Naive thymus-derived CD4-positive, alpha-beta T cell (primary cell): ENCODE measurements at regions of chr6 and their contacts with region 1.

Region 1: DNA sequence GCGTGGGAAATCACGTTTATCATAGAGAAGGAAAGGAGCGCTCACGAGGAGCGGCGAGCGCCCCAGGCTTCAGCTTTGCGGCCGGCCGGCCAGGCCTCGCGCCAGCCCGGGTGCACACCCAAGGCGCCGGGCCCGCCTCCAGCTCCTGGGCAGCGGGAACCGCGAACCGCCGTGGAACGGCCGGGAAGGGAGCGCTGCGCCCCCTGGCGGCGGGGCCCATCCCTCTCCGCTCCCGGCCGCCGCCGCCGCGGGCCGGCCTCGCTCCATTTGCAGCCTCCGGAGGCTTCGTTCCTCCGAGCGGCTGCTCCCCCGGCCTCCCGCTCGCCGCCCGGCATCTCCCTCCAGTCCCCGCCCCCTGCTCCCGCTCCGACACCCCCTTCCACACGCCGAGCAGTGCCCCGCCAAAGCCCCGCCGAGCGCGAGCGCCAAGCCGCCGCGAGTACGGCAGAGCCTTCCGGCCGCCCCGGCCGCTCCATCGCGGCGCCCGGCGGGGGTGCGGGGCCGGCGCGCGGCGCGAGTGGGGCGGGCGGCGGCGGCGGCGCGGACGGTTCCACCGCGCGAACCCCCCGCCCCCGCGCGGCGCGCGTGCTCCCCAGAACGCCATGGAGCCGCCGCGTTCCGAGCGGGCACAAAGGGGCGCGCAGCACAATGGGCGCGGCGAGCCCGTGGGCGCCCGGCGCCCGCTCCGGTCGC is 956 bp downstream of the BEND3 start:
- DNase-seq: peak; percentile 39 to 85 (median 67)
- ATAC-seq: peak; percentile 88
- H3K4me3 ChIP-seq: peak overlapping the region; percentile 32
- H3K4me3 Mint-ChIP-seq: peak overlapping the region; percentile 71 to 88 (median 85)
- H3K27ac ChIP-seq: no peak overlapping the region
- H3K27ac Mint-ChIP-seq: peak overlapping the region in 5 of 9 donors; percentile 49 to 77 (median 63)
- H3K4me1 ChIP-seq: peaks cover 14% of the 10 kb centered on the region in 2 donors
- H3K4me1 Mint-ChIP-seq: peaks cover 8 to 21% (median 18%) of the 10 kb centered on the region in 7 donors
- H3K27me3 ChIP-seq: no peaks in the 10 kb centered on the region
- H3K27me3 Mint-ChIP-seq: peaks cover 0 to 22% (median 7%) of the 10 kb centered on the region in 5 donors

Region 2: GRCh38 chr6:106444777-106445507 is 669.4 kb before region 1 on chr6:
- CTCF ChIA-PET with region 1: no interaction called
- POLR2A ChIA-PET with region 1: no interaction called
- intact Hi-C with region 1: loop called (anchors 1 to 10 kb)
- DNase-seq: peak in 7 of 9 donors; percentile 55 to 81 (median 70)
- ATAC-seq: peak; percentile 81
- H3K4me3 ChIP-seq: no peak overlapping the region
- H3K4me3 Mint-ChIP-seq: no peak overlapping the region
- H3K27ac ChIP-seq: no peak overlapping the region
- H3K27ac Mint-ChIP-seq: peak overlapping the region in 1 of 9 donors; percentile 43
- H3K4me1 ChIP-seq: peaks cover 0 to 5% of the 10 kb centered on the region in 2 donors
- H3K4me1 Mint-ChIP-seq: peaks cover 5 to 16% (median 14%) of the 10 kb centered on the region in 7 donors
- H3K27me3 ChIP-seq: peaks cover 0 to 4% of the 10 kb centered on the region in 2 donors
- H3K27me3 Mint-ChIP-seq: peaks cover 19 to 36% (median 27%) of the 10 kb centered on the region in 5 donors

Region 3: GRCh38 chr6:106629103-106629858 is 485.1 kb before region 1 on chr6 and contains the starts of genes QRSL1 and RTN4IP1:
- CTCF ChIA-PET with region 1: no interaction called
- POLR2A ChIA-PET with region 1: no interaction called
- intact Hi-C with region 1: loop called in 1 of 2 experiments (anchors 2 kb)
- DNase-seq: peak; percentile 67 to 94 (median 90)
- ATAC-seq: peak; percentile 98
- H3K4me3 ChIP-seq: peak within 1 kb of the TSS; percentile 87
- H3K4me3 Mint-ChIP-seq: peak within 1 kb of the TSS; percentile 93 to 100 (median 98)
- H3K27ac ChIP-seq: peak within 1 kb of the TSS; percentile 94
- H3K27ac Mint-ChIP-seq: peak within 1 kb of the TSS; percentile 96 to 99 (median 98)
- H3K4me1 ChIP-seq: peaks cover 7 to 13% of the 10 kb centered on the region in 2 donors
- H3K4me1 Mint-ChIP-seq: peaks cover 13 to 67% (median 38%) of the 10 kb centered on the region in 7 donors
- H3K27me3 ChIP-seq: no peaks in the 10 kb centered on the region
- H3K27me3 Mint-ChIP-seq: no peaks in the 10 kb centered on the region
- total RNA-seq, gene QRSL1: 8.0 to 14.8 (median 13.6) TPM
- total RNA-seq, gene RTN4IP1: 5.1 to 6.4 (median 5.6) TPM

Region 4: DNA sequence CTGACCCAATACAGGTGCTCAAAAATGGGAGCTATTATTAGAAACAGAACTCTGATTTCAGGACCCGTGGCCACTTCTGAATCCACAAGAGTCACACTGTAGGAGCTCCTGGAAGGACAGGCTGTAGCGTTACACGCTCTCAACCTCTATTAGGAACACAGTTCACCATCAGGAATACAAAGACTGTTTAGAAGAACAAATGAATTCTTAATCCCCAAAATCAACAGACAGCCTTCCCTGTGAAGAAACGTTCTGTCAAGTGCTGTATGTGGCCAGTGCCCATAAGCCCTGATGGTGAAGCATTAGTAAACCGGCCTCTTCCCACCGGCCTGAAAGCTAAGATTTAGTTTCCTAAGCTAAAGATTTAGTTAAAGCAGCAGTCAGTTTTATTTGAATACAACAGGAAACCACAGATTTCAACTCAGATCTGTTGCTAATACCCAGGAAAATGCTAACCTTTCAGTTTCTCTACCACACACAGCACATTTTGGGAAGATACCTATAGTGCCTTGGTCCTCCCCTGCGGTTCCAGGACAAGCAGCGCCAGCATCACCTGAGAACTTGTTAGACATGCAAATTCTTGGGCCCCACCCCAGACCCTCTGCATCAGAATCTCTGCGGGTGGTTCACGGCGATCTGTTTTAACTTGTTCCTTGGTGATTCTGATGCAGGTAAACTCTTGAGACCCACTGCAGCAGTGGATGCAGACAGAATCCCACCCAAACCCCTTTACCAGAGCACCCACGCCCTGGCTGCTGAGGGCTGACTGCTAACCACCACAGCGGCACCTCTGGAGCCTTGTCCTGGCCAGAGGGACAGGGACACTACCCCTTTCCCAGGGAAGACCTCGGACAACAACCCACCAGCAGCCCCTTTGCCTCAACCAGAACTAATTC is 53.0 kb before region 1 on chr6:
- CTCF ChIA-PET with region 1: no interaction called
- POLR2A ChIA-PET with region 1: no interaction called
- intact Hi-C with region 1: loop called in 1 of 2 experiments (anchors 2 kb)
- DNase-seq: peak in 3 of 9 donors; percentile 3 to 18 (median 5)
- ATAC-seq: peak; percentile 59
- H3K4me3 ChIP-seq: peak overlapping the region; percentile 14
- H3K4me3 Mint-ChIP-seq: peak overlapping the region; percentile 59 to 81 (median 78)
- H3K27ac ChIP-seq: no peak overlapping the region
- H3K27ac Mint-ChIP-seq: peak overlapping the region in 8 of 9 donors; percentile 32 to 82 (median 54)
- H3K4me1 ChIP-seq: peaks cover 4 to 11% of the 10 kb centered on the region in 2 donors
- H3K4me1 Mint-ChIP-seq: peaks cover 10 to 50% (median 31%) of the 10 kb centered on the region in 7 donors
- H3K27me3 ChIP-seq: no peaks in the 10 kb centered on the region
- H3K27me3 Mint-ChIP-seq: no peaks in the 10 kb centered on the region

Region 5: DNA sequence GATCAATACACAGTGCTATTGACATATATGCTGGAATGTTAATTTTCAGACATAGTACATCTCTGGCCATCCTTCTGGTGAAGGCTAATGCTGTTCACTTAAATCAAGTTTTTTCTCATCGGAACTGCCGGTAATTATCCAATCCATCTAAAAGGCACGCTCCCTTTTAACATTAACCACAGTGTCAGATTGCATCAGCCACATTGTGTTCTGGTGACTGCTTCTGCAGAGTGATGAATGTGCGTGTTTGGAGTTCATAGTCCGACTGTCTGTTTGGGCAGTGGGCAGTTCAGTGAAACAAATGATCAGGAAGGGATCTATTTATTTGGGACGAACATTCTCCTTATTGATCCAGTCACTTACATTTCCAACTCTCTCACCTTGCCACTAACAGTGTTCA is 425.1 kb after region 1 on chr6:
- CTCF ChIA-PET with region 1: no interaction called
- POLR2A ChIA-PET with region 1: no interaction called
- intact Hi-C with region 1: no loop called
- DNase-seq: no peak
- ATAC-seq: no peak
- H3K4me3 ChIP-seq: no peak overlapping the region
- H3K4me3 Mint-ChIP-seq: no peak overlapping the region
- H3K27ac ChIP-seq: no peak overlapping the region
- H3K27ac Mint-ChIP-seq: no peak overlapping the region
- H3K4me1 ChIP-seq: no peaks in the 10 kb centered on the region
- H3K4me1 Mint-ChIP-seq: no peaks in the 10 kb centered on the region
- H3K27me3 ChIP-seq: no peaks in the 10 kb centered on the region
- H3K27me3 Mint-ChIP-seq: peaks cover 23 to 46% (median 30%) of the 10 kb centered on the region in 5 donors

Region 6: DNA sequence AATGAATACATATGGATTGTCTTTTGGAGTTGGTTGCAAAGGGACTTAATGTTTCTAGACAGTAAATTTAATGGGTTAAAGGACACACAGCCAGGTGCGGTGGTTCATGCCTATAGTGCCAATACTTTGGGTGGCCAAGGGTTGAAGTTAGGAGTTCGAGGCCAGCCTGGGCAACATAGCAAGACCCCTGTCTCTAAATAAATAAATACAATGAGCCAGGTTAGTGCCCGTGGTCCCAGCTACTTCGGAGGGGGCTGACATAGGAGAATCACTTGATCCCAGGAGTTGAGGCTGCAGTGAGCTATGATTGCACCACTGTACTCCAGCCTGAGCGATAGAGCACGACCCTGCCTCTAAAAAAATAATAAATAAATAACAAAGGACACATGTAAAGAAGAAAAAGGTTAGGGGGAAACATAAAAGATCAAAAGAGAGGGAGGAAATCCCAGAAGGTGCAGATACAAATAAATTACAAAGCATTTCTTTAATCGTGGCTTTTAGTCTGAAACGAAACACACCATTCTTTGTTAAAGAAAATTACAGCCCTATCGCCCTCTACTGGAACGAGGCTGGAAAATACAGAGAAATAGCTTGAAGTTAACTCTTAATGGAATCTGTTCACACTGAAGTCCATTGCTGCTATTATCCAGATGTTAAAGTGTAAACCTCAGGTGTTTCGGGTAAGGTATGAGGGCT is 752.4 kb after region 1 on chr6:
- CTCF ChIA-PET with region 1: no interaction called
- POLR2A ChIA-PET with region 1: no interaction called
- intact Hi-C with region 1: loop called in 1 of 2 experiments (anchors 10 kb)
- DNase-seq: peak in 7 of 9 donors; percentile 29 to 64 (median 52)
- ATAC-seq: peak; percentile 76
- H3K4me3 ChIP-seq: no peak overlapping the region
- H3K4me3 Mint-ChIP-seq: peak overlapping the region in 1 of 10 donors; percentile 32
- H3K27ac ChIP-seq: no peak overlapping the region
- H3K27ac Mint-ChIP-seq: peak overlapping the region in 3 of 9 donors; percentile 37 to 64 (median 45)
- H3K4me1 ChIP-seq: no peaks in the 10 kb centered on the region
- H3K4me1 Mint-ChIP-seq: peaks cover 0 to 10% (median 4%) of the 10 kb centered on the region in 7 donors
- H3K27me3 ChIP-seq: no peaks in the 10 kb centered on the region
- H3K27me3 Mint-ChIP-seq: peaks cover 0 to 10% (median 0%) of the 10 kb centered on the region in 5 donors